ENCODE measurements at regions of chr11 and their contacts with region 1.

Region 1: GRCh38 chr11:107565219-107565937 is at the start of gene ALKBH8:
- DNase-seq: no peak
- ATAC-seq: peak; percentile 75
- H3K4me3 ChIP-seq: peak within 1 kb of the TSS; percentile 88 to 98
- H3K27ac ChIP-seq: peak within 1 kb of the TSS; percentile 57
- H3K4me1 ChIP-seq: peaks cover 35 to 51% of the 10 kb centered on the region in 2 experiments
- H3K27me3 ChIP-seq: no peaks in the 10 kb centered on the region
- CTCF ChIP-seq: 0 out of 6 replicates have a peak, but pooled peaks of 1 of the 3 experiments have one; percentile 6
- POLR2A ChIP-seq: peak; percentile 43
- RAD21 ChIP-seq: no peak
- total RNA-seq, gene ALKBH8: 11.6 TPM

Region 2: DNA sequence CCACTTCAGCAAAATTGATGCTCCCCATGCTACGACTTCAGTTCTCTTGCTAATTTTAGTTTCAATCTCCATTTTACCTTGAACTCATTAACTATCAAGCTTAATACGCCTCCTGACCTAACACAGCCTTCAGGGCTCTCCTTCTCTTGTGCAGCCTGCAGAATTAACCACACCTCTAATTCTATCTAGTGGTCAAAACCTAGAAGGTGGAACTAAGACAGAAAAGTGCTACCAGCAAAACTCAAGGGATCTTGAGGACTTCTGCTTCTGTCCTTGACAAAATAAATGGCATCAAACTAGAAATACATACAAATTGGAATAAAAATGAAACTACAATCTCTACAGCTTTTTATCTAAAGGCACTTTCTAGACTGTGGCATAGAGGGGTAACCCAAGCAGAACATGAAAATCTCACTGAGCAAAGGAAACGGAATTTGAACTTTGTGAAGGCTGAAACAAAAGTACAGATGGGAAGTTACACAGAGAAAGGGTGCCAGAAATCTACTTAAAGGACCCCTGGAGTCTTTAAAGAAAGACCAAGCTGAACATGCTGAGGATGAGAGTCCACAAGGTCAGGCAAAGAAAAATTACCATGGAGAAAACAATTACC is 118.5 kb before region 1 on chr11:
- CTCF ChIA-PET with region 1: no interaction called
- POLR2A ChIA-PET with region 1: no interaction called
- RAD21 ChIA-PET with region 1: no interaction called
- intact Hi-C with region 1: no loop called
- DNase-seq: no peak
- ATAC-seq: no peak
- H3K4me3 ChIP-seq: no peak overlapping the region
- H3K27ac ChIP-seq: no peak overlapping the region
- H3K4me1 ChIP-seq: no peaks in the 10 kb centered on the region
- H3K27me3 ChIP-seq: no peaks in the 10 kb centered on the region
- CTCF ChIP-seq: no peak
- POLR2A ChIP-seq: no peak
- RAD21 ChIP-seq: no peak

Region 3: GRCh38 chr11:107549253-107549953 is 16.0 kb before region 1 on chr11:
- CTCF ChIA-PET with region 1: interaction called, 11 read pairs
- POLR2A ChIA-PET with region 1: interaction called, 5 read pairs
- RAD21 ChIA-PET with region 1: no interaction called
- intact Hi-C with region 1: no loop called
- DNase-seq: no peak
- ATAC-seq: peak; percentile 49; the same call in 1 of the 2 replicates
- H3K4me3 ChIP-seq: no peak overlapping the region
- H3K27ac ChIP-seq: no peak overlapping the region
- H3K4me1 ChIP-seq: peaks cover 12 to 15% of the 10 kb centered on the region in 2 experiments
- H3K27me3 ChIP-seq: no peaks in the 10 kb centered on the region
- CTCF ChIP-seq: peak; percentile 80 to 91 (median 81)
- POLR2A ChIP-seq: no peak
- RAD21 ChIP-seq: peak; percentile 88

Region 4: GRCh38 chr11:107689317-107690202 is 124.2 kb after region 1 on chr11:
- CTCF ChIA-PET with region 1: interaction called, 50 read pairs
- POLR2A ChIA-PET with region 1: interaction called, 7 read pairs
- RAD21 ChIA-PET with region 1: interaction called, 6 to 11 read pairs
- intact Hi-C with region 1: loop called (anchors 1 kb)
- DNase-seq: peak; percentile 54
- ATAC-seq: peak; percentile 97
- H3K4me3 ChIP-seq: no peak overlapping the region
- H3K27ac ChIP-seq: no peak overlapping the region
- H3K4me1 ChIP-seq: no peaks in the 10 kb centered on the region
- H3K27me3 ChIP-seq: no peaks in the 10 kb centered on the region
- CTCF ChIP-seq: peak; percentile 54 to 93 (median 74)
- POLR2A ChIP-seq: no peak
- RAD21 ChIP-seq: peak; percentile 97

Region 5: DNA sequence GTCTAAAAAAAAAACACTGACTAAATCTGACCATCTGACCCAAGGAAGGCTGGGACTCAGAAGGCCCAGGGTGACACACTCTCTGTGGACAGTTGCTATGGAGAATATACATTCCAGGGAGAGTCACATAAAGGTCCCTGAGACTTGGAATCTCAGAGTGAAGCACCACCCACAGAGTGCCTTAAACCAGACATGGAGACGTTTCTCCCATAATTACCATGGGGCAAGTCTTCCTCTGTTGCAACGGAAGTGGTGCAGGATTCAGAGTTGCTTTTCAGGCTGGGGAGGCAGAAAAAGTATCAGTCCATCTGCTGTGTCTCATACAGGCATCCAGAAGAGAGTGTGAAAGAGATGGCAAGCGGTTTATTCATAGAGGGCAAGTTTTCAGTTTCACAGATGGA is 205.2 kb after region 1 on chr11:
- CTCF ChIA-PET with region 1: interaction called, 13 read pairs
- POLR2A ChIA-PET with region 1: interaction called, 4 read pairs
- RAD21 ChIA-PET with region 1: interaction called in 1 of 2 experiments, 3 read pairs
- intact Hi-C with region 1: loop called (anchors 1 kb)
- DNase-seq: no peak
- ATAC-seq: peak; percentile 35
- H3K4me3 ChIP-seq: no peak overlapping the region
- H3K27ac ChIP-seq: no peak overlapping the region
- H3K4me1 ChIP-seq: peaks cover 0 to 19% of the 10 kb centered on the region in 2 experiments; a peak in 2 of 4 replicates
- H3K27me3 ChIP-seq: no peaks in the 10 kb centered on the region
- CTCF ChIP-seq: no peak
- POLR2A ChIP-seq: no peak
- RAD21 ChIP-seq: no peak

Region 6: GRCh38 chr11:107840129-107840484 is 274.7 kb after region 1 on chr11:
- CTCF ChIA-PET with region 1: no interaction called
- POLR2A ChIA-PET with region 1: interaction called, 7 read pairs
- RAD21 ChIA-PET with region 1: no interaction called
- intact Hi-C with region 1: loop called (anchors 5 kb)
- DNase-seq: no peak
- ATAC-seq: peak; percentile 61
- H3K4me3 ChIP-seq: peak overlapping the region in 1 of 2 experiments; percentile 49; a peak in 2 of 4 replicates
- H3K27ac ChIP-seq: peak overlapping the region; percentile 69
- H3K4me1 ChIP-seq: peaks cover 54 to 67% of the 10 kb centered on the region in 2 experiments
- H3K27me3 ChIP-seq: no peaks in the 10 kb centered on the region
- CTCF ChIP-seq: no peak
- POLR2A ChIP-seq: no peak
- RAD21 ChIP-seq: no peak

Region 7: GRCh38 chr11:107898270-107898669 is 332.9 kb after region 1 on chr11:
- CTCF ChIA-PET with region 1: no interaction called
- POLR2A ChIA-PET with region 1: no interaction called
- RAD21 ChIA-PET with region 1: no interaction called
- intact Hi-C with region 1: loop called (anchors 5 kb)
- DNase-seq: peak; percentile 36
- ATAC-seq: peak; percentile 94
- H3K4me3 ChIP-seq: no peak overlapping the region
- H3K27ac ChIP-seq: no peak overlapping the region
- H3K4me1 ChIP-seq: no peaks in the 10 kb centered on the region
- H3K27me3 ChIP-seq: no peaks in the 10 kb centered on the region
- CTCF ChIP-seq: peak; percentile 62 to 77 (median 71); a peak in 5 of 6 replicates
- POLR2A ChIP-seq: no peak
- RAD21 ChIP-seq: peak; percentile 89

Region 8: DNA sequence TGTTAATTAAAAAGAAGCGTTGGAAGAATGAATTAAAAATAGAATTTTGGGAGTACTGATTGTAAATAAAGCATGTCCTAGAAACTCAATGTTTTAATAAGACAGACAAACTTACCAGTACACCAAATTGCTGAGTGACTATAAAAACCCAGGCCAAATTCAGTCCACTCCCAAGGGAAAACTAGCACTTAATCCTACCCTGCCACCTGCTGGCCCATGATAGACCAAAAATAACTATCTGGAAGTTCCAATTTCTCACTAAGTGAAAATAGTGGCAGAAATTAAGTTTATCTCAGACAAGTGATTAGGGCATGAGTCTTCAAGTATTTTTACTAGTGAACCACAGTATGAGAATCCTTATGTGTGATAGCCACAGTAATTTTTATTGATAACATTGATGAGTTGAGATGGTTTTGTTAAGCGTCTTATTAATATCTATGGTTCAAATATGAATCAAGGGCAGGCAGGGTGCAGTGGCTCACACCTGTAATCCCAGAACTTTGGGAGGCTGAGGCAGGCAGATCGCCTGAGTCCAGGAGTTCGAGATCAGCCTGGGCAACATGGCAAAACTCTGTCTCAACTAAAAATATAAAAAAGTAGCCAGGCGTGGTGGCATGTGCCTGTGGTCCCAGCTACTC is 1089.7 kb after region 1 on chr11:
- CTCF ChIA-PET with region 1: no interaction called
- POLR2A ChIA-PET with region 1: no interaction called
- RAD21 ChIA-PET with region 1: no interaction called
- intact Hi-C with region 1: loop called (anchors 10 kb)
- DNase-seq: peak; percentile 54
- ATAC-seq: peak; percentile 91
- H3K4me3 ChIP-seq: no peak overlapping the region
- H3K27ac ChIP-seq: no peak overlapping the region
- H3K4me1 ChIP-seq: no peaks in the 10 kb centered on the region
- H3K27me3 ChIP-seq: no peaks in the 10 kb centered on the region
- CTCF ChIP-seq: peak; percentile 64 to 82 (median 80)
- POLR2A ChIP-seq: no peak
- RAD21 ChIP-seq: peak; percentile 94